CD8-positive, alpha-beta T cell (primary cell): ENCODE measurements at regions of chr14 and their contacts with region 1.

Region 1: DNA sequence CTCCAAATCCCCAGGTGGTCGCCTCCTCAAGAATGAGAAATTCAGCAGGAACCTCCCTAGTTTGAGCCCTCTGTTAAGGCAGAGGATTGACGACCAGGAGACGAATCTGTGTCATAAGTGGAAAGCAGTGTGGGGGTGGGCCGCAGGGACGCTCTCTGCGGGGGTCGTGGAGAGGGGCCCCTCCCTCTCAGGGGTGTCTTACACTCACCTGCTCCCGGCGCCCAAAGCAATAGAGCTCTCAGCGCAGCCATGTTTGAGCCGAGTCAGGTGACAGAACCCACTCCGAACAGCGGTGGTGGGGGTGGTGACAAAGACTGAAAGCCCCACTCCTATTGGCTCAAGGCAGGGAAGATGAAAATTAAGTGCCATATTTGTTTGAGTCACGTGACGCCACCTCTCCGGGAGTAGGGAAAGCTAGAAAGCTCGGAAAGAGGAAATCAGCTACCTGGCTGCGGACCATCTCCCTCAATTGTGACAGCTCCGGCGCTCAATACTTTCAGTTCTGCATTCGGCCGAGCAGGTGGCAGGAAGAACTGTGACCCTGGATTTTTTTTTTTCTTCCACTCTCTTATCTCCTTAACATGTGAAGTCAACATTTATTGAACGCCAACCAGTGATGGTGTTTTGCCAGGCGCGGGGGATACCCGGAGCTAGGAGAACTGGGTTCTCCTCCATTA is at the start of gene ZFYVE26:
- DNase-seq: peak; percentile 73 to 96 (median 88)
- ATAC-seq: peak; percentile 90
- H3K4me3 ChIP-seq: peak within 1 kb of the TSS; percentile 65 to 85
- H3K4me3 Mint-ChIP-seq: peak within 1 kb of the TSS; percentile 97
- H3K27ac ChIP-seq: peak within 1 kb of the TSS; percentile 65 to 73
- H3K27ac Mint-ChIP-seq: peak within 1 kb of the TSS; percentile 97
- H3K4me1 ChIP-seq: peaks cover 28% of the 10 kb centered on the region
- H3K4me1 Mint-ChIP-seq: peaks cover 55% of the 10 kb centered on the region
- H3K27me3 ChIP-seq: no peaks in the 10 kb centered on the region
- H3K27me3 Mint-ChIP-seq: no peaks in the 10 kb centered on the region
- CTCF ChIP-seq: no peak
- total RNA-seq, gene ZFYVE26: 20.4 to 21.4 TPM

Region 2: DNA sequence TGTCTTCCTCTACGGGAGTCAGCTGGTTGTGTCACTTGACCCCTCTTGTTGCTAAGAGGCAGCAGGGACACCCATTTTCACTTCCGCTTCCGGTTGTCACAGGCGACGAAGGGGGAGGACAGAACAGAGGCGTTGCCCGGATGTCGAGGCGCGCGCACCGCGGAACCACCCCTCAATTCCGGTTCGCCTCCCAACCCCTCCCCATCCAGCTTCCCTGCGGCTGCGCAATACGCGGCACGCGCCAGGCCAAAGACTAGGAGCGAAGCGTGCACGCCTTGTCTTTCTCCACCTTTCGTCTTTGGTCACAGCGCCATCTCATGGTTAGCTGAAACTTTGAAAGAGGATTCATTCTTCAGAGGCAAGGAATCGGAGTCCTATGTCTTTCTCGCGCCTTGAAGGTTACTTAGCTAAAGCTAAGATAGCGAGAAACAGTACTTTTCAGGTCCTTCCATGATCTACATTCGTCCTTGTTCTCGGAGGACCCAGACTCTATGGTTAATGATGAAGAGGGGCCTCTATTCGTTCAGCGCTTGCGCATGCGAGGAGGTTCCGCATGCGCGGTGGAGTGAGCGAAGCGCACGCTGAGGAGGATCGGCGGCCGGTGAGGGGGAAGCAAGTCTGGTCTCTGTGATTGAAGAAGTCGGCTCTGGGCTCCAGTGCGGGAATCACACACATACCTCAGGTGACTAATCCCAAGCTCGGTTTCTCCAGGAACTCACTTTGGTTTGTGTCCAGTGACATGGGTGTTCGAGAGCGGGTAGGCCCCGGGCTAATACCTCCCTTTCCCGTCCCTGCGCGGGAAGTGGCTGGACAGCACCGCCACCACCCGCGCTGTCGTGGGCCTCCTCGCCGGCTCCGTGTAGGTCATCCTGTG is 456.5 kb before region 1 on chr14 and contains the starts of genes ATP6V1D and EIF2S1:
- CTCF ChIA-PET with region 1: no interaction called
- POLR2A ChIA-PET with region 1: no interaction called
- intact Hi-C with region 1: loop called (anchors 2 to 5 kb)
- DNase-seq: peak; percentile 99 to 100 (median 99)
- ATAC-seq: peak; percentile 93
- H3K4me3 ChIP-seq: peak within 1 kb of the TSS; percentile 79 to 87
- H3K4me3 Mint-ChIP-seq: peak within 1 kb of the TSS; percentile 99
- H3K27ac ChIP-seq: peak within 1 kb of the TSS; percentile 83 to 93
- H3K27ac Mint-ChIP-seq: peak within 1 kb of the TSS; percentile 97
- H3K4me1 ChIP-seq: peaks cover 29% of the 10 kb centered on the region
- H3K4me1 Mint-ChIP-seq: peaks cover 80% of the 10 kb centered on the region
- H3K27me3 ChIP-seq: no peaks in the 10 kb centered on the region
- H3K27me3 Mint-ChIP-seq: no peaks in the 10 kb centered on the region
- CTCF ChIP-seq: peak; percentile 99
- total RNA-seq, gene ATP6V1D: 30.1 to 34.2 TPM
- total RNA-seq, gene EIF2S1: 29.4 to 34.4 TPM

Region 3: GRCh38 chr14:67599698-67600561 is 216.5 kb before region 1 on chr14 and contains the start of gene PIGH:
- CTCF ChIA-PET with region 1: no interaction called
- POLR2A ChIA-PET with region 1: no interaction called
- intact Hi-C with region 1: loop called (anchors 5 kb)
- DNase-seq: peak; percentile 90 to 97 (median 94)
- ATAC-seq: peak; percentile 97
- H3K4me3 ChIP-seq: peak within 1 kb of the TSS; percentile 92 to 99
- H3K4me3 Mint-ChIP-seq: peak within 1 kb of the TSS; percentile 98
- H3K27ac ChIP-seq: peak within 1 kb of the TSS; percentile 74 to 87
- H3K27ac Mint-ChIP-seq: peak within 1 kb of the TSS; percentile 98
- H3K4me1 ChIP-seq: peaks cover 19% of the 10 kb centered on the region
- H3K4me1 Mint-ChIP-seq: peaks cover 49% of the 10 kb centered on the region
- H3K27me3 ChIP-seq: no peaks in the 10 kb centered on the region
- H3K27me3 Mint-ChIP-seq: no peaks in the 10 kb centered on the region
- CTCF ChIP-seq: peak; percentile 52
- total RNA-seq, gene PIGH: 66.0 to 67.8 TPM

Region 4: GRCh38 chr14:67674481-67675169 is 141.8 kb before region 1 on chr14 and contains the start of gene VTI1B:
- CTCF ChIA-PET with region 1: no interaction called
- POLR2A ChIA-PET with region 1: no interaction called
- intact Hi-C with region 1: loop called (anchors 1 kb)
- DNase-seq: peak; percentile 64 to 89 (median 79)
- ATAC-seq: peak; percentile 92
- H3K4me3 ChIP-seq: peak within 1 kb of the TSS; percentile 78 to 82
- H3K4me3 Mint-ChIP-seq: peak within 1 kb of the TSS; percentile 94
- H3K27ac ChIP-seq: peak within 1 kb of the TSS; percentile 93 to 95
- H3K27ac Mint-ChIP-seq: peak within 1 kb of the TSS; percentile 93
- H3K4me1 ChIP-seq: peaks cover 32% of the 10 kb centered on the region
- H3K4me1 Mint-ChIP-seq: peaks cover 39% of the 10 kb centered on the region
- H3K27me3 ChIP-seq: no peaks in the 10 kb centered on the region
- H3K27me3 Mint-ChIP-seq: no peaks in the 10 kb centered on the region
- CTCF ChIP-seq: no peak
- total RNA-seq, gene VTI1B: 27.6 to 31.1 TPM

Region 5: DNA sequence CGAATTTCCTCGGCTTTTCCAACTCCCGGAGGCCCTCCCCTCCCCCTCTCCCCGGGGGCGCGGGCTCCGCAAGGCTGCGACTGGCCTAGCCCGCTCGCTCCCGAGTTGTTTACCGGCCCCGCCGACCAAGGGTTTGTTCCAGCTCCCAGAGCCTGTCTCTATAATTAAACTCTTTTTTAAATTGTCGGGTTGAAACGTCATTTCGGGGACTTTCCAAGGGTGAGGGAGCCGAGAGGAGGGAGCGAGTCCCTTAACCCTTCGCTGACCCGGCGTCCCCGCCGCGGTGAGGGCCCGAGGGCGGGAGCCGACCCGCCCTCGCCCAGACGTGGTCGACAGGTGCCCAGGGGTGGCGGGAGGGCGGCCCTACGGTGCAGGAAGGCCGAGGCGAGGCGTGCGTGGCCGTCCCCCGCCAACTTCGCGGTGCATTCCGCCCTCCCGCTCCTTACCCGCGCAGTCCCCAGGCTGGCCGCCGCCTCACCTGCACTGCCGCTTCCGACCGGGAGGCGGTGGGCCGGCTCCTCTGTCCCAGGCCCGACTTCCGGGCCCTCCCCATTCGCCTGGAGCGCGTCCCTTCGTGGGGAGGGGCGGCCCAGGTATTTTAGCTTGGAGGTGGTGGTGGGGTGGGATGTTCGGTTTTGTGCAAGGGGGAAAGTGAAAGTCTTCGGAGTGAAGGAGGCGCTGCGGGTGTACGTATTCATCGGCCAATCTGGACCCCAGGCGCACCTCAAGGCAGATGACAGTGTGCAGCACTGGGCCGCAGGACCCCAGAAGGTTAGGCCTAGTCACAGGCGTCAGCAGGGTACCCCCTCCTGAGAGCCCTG is 979.3 kb after region 1 on chr14:
- CTCF ChIA-PET with region 1: no interaction called
- POLR2A ChIA-PET with region 1: interaction called, 3 read pairs
- intact Hi-C with region 1: loop called in 1 of 2 experiments (anchors 10 kb)
- DNase-seq: peak; percentile 60 to 94 (median 82)
- ATAC-seq: peak; percentile 41
- H3K4me3 ChIP-seq: peak overlapping the region; percentile 94 to 97
- H3K4me3 Mint-ChIP-seq: peak overlapping the region; percentile 92
- H3K27ac ChIP-seq: peak overlapping the region; percentile 99 to 100
- H3K27ac Mint-ChIP-seq: peak overlapping the region; percentile 100
- H3K4me1 ChIP-seq: peaks cover 18% of the 10 kb centered on the region
- H3K4me1 Mint-ChIP-seq: peaks cover 37% of the 10 kb centered on the region
- H3K27me3 ChIP-seq: no peaks in the 10 kb centered on the region
- H3K27me3 Mint-ChIP-seq: no peaks in the 10 kb centered on the region
- CTCF ChIP-seq: peak; percentile 71

Region 6: GRCh38 chr14:69766984-69767368 is 1950.5 kb after region 1 on chr14 and contains the start of gene SRSF5:
- CTCF ChIA-PET with region 1: no interaction called
- POLR2A ChIA-PET with region 1: no interaction called
- intact Hi-C with region 1: loop called (anchors 2 to 10 kb)
- DNase-seq: peak; percentile 86 to 97 (median 96)
- ATAC-seq: peak; percentile 80
- H3K4me3 ChIP-seq: peak within 1 kb of the TSS; percentile 78 to 88
- H3K4me3 Mint-ChIP-seq: peak within 1 kb of the TSS; percentile 99
- H3K27ac ChIP-seq: peak within 1 kb of the TSS; percentile 97 to 99
- H3K27ac Mint-ChIP-seq: peak within 1 kb of the TSS; percentile 100
- H3K4me1 ChIP-seq: peaks cover 50% of the 10 kb centered on the region
- H3K4me1 Mint-ChIP-seq: peaks cover 67% of the 10 kb centered on the region
- H3K27me3 ChIP-seq: no peaks in the 10 kb centered on the region
- H3K27me3 Mint-ChIP-seq: no peaks in the 10 kb centered on the region
- CTCF ChIP-seq: no peak
- total RNA-seq, gene SRSF5: 1,544 to 1,597 TPM